WTC11 (cell line): ENCODE measurements at regions of chr9 and their contacts with region 1.

Region 1: GRCh38 chr9:34403554-34404380 is 27.1 kb upstream of the MYORG start:
- DNase-seq: peak; percentile 82
- ATAC-seq: peak; percentile 43
- H3K4me3 Mint-ChIP-seq: no peak overlapping the region
- H3K27ac Mint-ChIP-seq: no peak overlapping the region
- H3K4me1 Mint-ChIP-seq: no peaks in the 10 kb centered on the region
- H3K27me3 Mint-ChIP-seq: no peaks in the 10 kb centered on the region
- CTCF ChIP-seq: peak; percentile 98

Region 2: DNA sequence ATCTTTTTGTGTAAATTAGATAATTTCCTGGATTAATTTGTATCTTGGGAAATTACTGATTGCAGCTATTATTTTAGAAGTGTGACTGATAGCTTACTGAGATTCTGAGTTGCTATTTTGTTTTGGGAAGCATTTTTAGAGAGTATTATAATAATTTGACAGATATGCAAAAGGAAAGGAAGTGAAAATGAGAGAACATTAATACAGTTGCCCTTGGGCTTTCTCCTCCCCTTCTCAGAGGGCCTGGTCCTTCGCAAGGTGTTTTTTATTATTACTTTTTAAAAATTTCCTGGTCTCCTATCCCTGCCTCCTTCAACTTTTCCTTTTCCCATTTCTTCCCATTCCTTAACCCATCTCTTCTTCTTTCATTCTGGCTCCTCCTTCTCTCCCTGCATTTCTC is 192.4 kb before region 1 on chr9:
- CTCF ChIA-PET with region 1: no interaction called
- POLR2A ChIA-PET with region 1: no interaction called
- DNase-seq: no peak
- ATAC-seq: no peak
- H3K4me3 Mint-ChIP-seq: no peak overlapping the region
- H3K27ac Mint-ChIP-seq: no peak overlapping the region
- H3K4me1 Mint-ChIP-seq: no peaks in the 10 kb centered on the region
- H3K27me3 Mint-ChIP-seq: no peaks in the 10 kb centered on the region
- CTCF ChIP-seq: no peak

Region 3: GRCh38 chr9:34332076-34332964 is 71.4 kb before region 1 on chr9:
- CTCF ChIA-PET with region 1: interaction called, 15 read pairs
- POLR2A ChIA-PET with region 1: no interaction called
- DNase-seq: no peak
- ATAC-seq: no peak
- H3K4me3 Mint-ChIP-seq: no peak overlapping the region
- H3K27ac Mint-ChIP-seq: peak overlapping the region; percentile 58
- H3K4me1 Mint-ChIP-seq: peaks cover 54% of the 10 kb centered on the region
- H3K27me3 Mint-ChIP-seq: no peaks in the 10 kb centered on the region; the same call in 1 of the 2 replicates
- CTCF ChIP-seq: no peak

Region 4: DNA sequence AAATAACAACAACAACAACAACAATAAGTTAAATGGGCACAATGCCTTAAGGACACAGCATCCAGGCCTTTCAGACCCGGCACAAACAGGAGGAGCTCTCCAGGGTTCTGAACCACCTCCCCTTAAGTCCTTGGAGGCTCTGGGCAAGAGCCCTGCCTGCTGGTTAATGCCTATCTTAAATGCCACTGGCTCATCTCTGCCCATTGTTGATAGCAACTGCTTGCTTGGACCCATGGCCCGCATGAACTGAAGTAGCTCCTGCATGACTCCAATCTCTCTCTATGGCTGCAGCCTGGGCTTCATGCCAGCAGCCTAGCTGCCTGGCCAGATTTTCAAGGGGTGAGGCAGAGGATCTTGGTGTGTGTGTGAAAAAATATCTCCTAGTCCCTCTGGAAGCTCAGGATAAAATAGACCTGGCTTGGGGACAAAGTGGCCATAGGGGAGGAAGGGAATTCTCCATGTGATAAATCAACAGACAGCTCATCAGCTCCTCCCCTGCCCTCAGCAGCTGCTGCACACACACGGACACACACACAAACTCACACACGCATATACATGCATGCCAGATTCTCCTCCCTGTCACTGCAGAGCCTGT is 27.2 kb after region 1 on chr9:
- CTCF ChIA-PET with region 1: interaction called, 39 read pairs
- POLR2A ChIA-PET with region 1: no interaction called
- DNase-seq: peak; percentile 65
- ATAC-seq: peak; percentile 92
- H3K4me3 Mint-ChIP-seq: no peak overlapping the region
- H3K27ac Mint-ChIP-seq: no peak overlapping the region
- H3K4me1 Mint-ChIP-seq: peaks cover 9% of the 10 kb centered on the region
- H3K27me3 Mint-ChIP-seq: no peaks in the 10 kb centered on the region
- CTCF ChIP-seq: no peak

Region 5: DNA sequence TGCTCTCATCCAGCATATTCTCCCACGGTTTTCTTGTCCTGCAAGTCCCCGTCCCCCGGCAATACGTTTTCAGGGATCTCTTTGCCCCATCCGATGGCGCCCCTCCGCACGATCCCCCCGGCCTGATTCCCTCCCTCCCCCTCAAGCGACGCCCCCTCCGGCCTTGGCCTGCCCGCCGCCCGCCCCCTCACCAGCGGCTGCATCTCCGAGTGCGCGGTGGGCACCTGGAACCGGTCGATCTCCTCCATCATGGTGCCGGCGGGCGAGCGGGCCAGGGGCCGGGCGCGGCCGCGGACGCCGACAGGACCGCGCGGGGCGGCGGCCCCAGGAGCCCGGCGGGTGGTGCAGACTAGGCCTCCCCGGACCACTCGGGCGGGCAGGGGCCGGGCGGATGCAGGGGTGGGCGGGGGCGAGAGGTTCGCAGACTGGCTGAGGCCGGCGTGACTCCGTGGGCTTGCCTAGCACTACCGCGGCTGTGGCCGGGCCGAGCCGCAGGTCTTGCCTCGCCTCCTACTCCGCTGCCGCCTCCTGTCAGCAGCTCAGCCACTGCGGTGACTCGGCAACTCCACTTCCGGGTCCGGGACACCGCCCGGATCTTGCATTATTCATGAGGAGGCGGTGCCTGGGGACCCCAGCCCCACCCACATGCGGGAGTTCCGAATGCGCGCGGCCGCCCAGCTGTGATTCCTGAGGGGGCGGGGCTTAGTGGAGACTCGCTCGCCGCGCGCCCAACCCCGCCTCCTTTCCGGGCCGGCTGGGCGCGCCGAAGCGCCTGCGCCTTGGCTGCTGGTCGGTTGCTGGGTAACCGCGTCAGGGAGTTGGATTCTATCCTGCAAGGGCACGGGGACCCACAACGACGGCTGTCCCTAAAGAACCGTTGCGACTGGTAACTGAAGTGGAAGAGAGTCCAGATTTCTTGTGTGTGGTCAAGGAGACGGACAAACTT is 54.5 kb after region 1 on chr9 and contains the starts of genes DNAI1 and FAM219A:
- CTCF ChIA-PET with region 1: interaction called, 34 read pairs
- POLR2A ChIA-PET with region 1: interaction called, 4 read pairs
- DNase-seq: peak; percentile 99
- ATAC-seq: peak; percentile 79
- H3K4me3 Mint-ChIP-seq: peak within 1 kb of the TSS; percentile 86
- H3K27ac Mint-ChIP-seq: peak within 1 kb of the TSS; percentile 70
- H3K4me1 Mint-ChIP-seq: peaks cover 18% of the 10 kb centered on the region
- H3K27me3 Mint-ChIP-seq: peaks cover 32% of the 10 kb centered on the region
- CTCF ChIP-seq: no peak
- total RNA-seq, gene DNAI1: 1.5 to 2.1 TPM (median 1.6 TPM) in 3 replicates
- total RNA-seq, gene FAM219A: 17.2 to 20.6 TPM (median 19.5 TPM) in 3 replicates

Region 6: DNA sequence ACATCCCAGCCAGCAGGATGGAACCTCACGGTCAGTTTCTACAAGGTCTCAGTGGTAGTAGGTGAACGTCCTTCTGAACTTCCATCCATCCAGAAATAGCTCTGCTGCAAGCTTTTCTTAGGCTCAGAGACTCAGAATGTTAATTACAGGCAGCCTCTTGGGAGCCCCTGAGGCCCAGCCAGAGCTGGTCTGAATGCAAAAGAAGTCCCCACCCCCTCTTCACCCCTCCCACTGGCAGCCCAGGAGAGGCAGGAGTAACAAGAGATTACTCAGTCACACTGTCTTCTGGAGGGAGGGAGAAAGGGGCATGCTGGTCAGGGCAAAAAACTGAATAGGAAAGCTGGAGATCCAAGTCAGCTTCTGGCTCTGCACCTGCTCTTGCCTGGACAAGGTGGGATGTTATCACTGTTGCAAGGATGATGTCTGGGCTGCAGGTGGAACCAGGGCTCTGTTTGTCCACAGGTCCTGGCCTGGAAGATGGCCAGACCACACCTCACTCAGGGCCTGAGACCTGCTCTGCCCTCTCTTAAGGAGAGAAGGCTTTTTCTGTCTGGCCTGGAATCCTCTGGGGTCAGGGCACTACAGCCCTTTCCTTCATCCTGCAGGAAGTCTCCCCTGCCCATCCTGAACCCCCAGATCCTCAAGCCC is 109.9 kb after region 1 on chr9:
- CTCF ChIA-PET with region 1: interaction called, 24 read pairs
- POLR2A ChIA-PET with region 1: no interaction called
- DNase-seq: peak; percentile 72
- ATAC-seq: peak; percentile 78
- H3K4me3 Mint-ChIP-seq: peak overlapping the region; percentile 43
- H3K27ac Mint-ChIP-seq: peak overlapping the region; percentile 96
- H3K4me1 Mint-ChIP-seq: peaks cover 59% of the 10 kb centered on the region
- H3K27me3 Mint-ChIP-seq: no peaks in the 10 kb centered on the region
- CTCF ChIP-seq: no peak

Region 7: DNA sequence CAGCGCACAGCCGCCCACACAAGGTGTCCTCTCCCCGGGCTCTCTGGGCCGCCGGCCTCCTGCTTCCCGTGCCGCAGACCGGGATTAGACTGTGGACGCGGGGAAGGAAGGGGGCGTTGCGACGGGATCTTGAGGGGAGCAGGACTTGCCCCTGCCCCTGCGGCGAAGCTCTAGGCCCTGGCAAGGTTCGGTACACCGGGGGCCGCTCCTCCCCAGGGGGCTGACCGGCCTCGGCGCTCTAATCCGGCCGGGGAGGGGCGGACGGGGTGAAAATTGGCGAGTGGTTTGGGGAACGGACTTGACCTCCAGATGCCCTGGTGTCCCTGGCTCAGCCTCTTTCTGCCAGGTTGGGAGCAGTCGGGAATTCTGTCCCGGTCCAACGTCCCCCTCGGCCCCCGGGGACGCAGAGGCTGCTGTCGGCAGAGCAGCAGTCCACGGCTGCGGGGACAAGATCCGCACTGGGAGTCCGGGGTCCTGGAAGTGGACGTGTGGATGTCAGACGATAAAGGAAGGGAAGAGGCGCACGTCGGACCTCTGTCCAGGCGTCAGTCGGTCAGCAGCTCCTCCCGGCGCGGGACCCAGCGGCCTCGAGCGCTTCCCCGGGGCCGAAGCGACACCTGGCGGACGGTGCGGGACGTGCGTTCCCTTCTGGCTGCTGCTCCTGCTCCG is 187.6 kb after region 1 on chr9:
- CTCF ChIA-PET with region 1: interaction called, 33 read pairs
- POLR2A ChIA-PET with region 1: no interaction called
- DNase-seq: peak; percentile 93
- ATAC-seq: peak; percentile 64
- H3K4me3 Mint-ChIP-seq: peak overlapping the region; percentile 78
- H3K27ac Mint-ChIP-seq: no peak overlapping the region
- H3K4me1 Mint-ChIP-seq: peaks cover 32% of the 10 kb centered on the region
- H3K27me3 Mint-ChIP-seq: peaks cover 79% of the 10 kb centered on the region
- CTCF ChIP-seq: peak; percentile 89